Caco-2 (cell line): ENCODE measurements at regions of chr1 and their contacts with region 1.

Region 1: GRCh38 chr1:192775631-192776030 is 33.2 kb upstream of the RGS2 start:
- DNase-seq: no peak
- H3K4me3 ChIP-seq: no peak overlapping the region
- H3K4me3 Mint-ChIP-seq: no peak overlapping the region
- H3K27ac Mint-ChIP-seq: no peak overlapping the region
- H3K4me1 ChIP-seq: no peaks in the 10 kb centered on the region
- H3K4me1 Mint-ChIP-seq: no peaks in the 10 kb centered on the region
- H3K27me3 ChIP-seq: no peaks in the 10 kb centered on the region
- H3K27me3 Mint-ChIP-seq: no peaks in the 10 kb centered on the region
- CTCF ChIP-seq: no peak

Region 2: DNA sequence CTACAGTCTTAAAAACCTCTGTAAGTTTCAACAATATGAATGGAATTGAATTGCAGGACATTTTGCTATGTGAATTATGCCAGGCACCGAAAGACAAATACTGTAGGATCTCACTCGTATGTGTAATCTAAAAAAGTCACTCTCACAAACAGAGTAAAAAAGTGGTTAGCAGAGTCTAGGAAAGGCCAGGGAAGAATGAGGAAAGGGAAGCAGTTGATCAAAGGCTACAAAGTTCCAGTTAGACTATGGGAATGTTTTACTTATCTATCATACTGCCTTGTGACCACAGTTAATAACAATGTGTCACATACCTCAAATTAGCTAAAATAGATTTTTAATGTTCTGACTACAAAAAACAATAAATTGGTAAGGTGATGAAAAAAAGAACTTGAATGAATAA is 1732.6 kb before region 1 on chr1:
- CTCF ChIA-PET with region 1: no interaction called
- POLR2A ChIA-PET with region 1: no interaction called
- intact Hi-C with region 1: loop called (anchors 10 kb)
- DNase-seq: no peak
- H3K4me3 ChIP-seq: no peak overlapping the region
- H3K4me3 Mint-ChIP-seq: no peak overlapping the region
- H3K27ac Mint-ChIP-seq: no peak overlapping the region
- H3K4me1 ChIP-seq: no peaks in the 10 kb centered on the region
- H3K4me1 Mint-ChIP-seq: no peaks in the 10 kb centered on the region
- H3K27me3 ChIP-seq: no peaks in the 10 kb centered on the region
- H3K27me3 Mint-ChIP-seq: no peaks in the 10 kb centered on the region
- CTCF ChIP-seq: no peak